CD4-positive, alpha-beta T cell (primary cell): ENCODE measurements at regions of chr9 and their contacts with region 1.

Region 1: DNA sequence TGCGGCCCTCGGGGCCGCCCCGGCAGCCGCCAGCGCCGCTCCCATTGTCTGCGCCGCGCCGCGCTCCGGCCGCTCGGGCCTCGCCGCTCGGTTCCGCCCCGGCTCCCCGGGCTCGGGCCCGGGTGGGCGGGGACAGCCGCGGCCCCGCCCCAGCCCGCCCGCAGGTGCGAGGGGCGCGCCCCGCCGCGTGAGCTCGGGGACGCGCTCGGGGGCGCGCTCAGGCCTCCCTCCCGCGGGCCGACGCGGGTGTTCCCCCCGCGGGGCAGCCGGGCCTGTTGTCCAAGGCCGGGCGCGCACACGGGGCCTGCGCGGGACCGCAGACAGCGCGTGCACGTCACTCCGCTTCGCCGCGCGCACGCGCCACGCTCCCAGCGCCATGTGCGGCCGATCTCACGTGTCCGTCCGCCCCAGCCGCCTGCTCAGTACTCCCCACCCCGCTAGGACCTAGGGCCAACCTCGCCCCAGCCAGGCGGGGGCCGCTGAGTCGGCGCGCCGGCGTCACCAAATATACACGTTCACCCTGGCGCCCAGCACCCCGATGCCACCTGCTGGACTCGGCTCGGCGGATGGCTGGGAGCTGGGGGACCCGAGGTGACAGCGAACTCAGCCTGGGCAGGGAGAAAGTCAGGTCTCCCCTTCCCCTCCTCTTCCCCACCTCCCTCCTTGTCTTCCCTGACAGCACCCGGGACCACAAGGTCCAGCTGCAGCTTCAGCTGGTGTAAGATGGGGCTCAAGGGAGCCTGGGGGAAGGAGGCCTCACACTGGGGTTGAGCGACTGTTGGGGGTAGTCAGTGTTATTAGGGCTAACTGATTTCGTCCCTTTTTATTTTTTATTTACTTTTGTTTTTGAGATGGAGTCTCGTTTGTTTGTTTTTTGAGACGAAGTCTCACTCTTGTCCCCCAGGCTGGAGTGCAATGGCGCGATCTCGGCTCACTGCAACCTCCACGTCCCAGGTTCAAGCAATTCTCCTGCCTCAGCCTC is 14.3 kb downstream of the GBGT1 start:
- DNase-seq: peak; percentile 64 to 95 (median 73)
- ATAC-seq: peak; percentile 43
- H3K4me3 ChIP-seq: peak overlapping the region; percentile 58
- H3K4me3 Mint-ChIP-seq: peak overlapping the region; percentile 88
- H3K27ac ChIP-seq: peak overlapping the region; percentile 60 to 74
- H3K27ac Mint-ChIP-seq: peak overlapping the region; percentile 87
- H3K4me1 ChIP-seq: peaks cover 43% of the 10 kb centered on the region
- H3K4me1 Mint-ChIP-seq: peaks cover 33% of the 10 kb centered on the region
- H3K27me3 ChIP-seq: no peaks in the 10 kb centered on the region
- H3K27me3 Mint-ChIP-seq: no peaks in the 10 kb centered on the region
- CTCF ChIP-seq: peak; percentile 44

Region 2: GRCh38 chr9:133023117-133023890 is 126.1 kb before region 1 on chr9:
- CTCF ChIA-PET with region 1: interaction called, 10 read pairs
- POLR2A ChIA-PET with region 1: no interaction called
- intact Hi-C with region 1: loop called in 1 of 2 experiments (anchors 2 kb)
- DNase-seq: peak in 10 of 14 experiments; percentile 12 to 59 (median 36)
- ATAC-seq: no peak
- H3K4me3 ChIP-seq: no peak overlapping the region
- H3K4me3 Mint-ChIP-seq: no peak overlapping the region
- H3K27ac ChIP-seq: no peak overlapping the region
- H3K27ac Mint-ChIP-seq: no peak overlapping the region
- H3K4me1 ChIP-seq: peaks cover 14% of the 10 kb centered on the region
- H3K4me1 Mint-ChIP-seq: peaks cover 10% of the 10 kb centered on the region
- H3K27me3 ChIP-seq: no peaks in the 10 kb centered on the region
- H3K27me3 Mint-ChIP-seq: peaks cover 5% of the 10 kb centered on the region
- CTCF ChIP-seq: no peak

Region 3: DNA sequence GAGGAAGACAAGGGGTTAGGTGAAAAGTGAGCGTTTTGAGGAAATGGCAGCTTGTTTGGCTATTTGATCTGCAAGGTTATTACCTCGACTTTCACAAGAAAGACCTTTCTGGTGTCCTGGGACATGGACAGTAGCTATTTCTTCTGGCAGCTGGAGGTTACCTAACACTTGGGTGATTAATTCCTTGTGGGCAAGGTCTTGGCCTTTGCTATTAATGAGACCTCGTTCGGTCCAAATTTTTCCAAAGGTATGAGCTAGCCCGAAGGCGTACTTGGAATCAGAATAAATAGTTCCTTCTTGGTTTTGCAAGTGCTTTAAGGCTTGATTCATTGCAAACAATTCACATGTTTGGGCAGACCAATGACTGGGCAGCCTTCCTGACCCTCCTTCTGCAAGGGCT is 113.7 kb before region 1 on chr9:
- CTCF ChIA-PET with region 1: interaction called, 7 read pairs
- POLR2A ChIA-PET with region 1: interaction called, 20 read pairs
- intact Hi-C with region 1: loop called in 1 of 2 experiments (anchors 5 kb)
- DNase-seq: no peak
- ATAC-seq: no peak
- H3K4me3 ChIP-seq: no peak overlapping the region
- H3K4me3 Mint-ChIP-seq: no peak overlapping the region
- H3K27ac ChIP-seq: no peak overlapping the region
- H3K27ac Mint-ChIP-seq: no peak overlapping the region
- H3K4me1 ChIP-seq: peaks cover 18% of the 10 kb centered on the region
- H3K4me1 Mint-ChIP-seq: peaks cover 59% of the 10 kb centered on the region
- H3K27me3 ChIP-seq: no peaks in the 10 kb centered on the region
- H3K27me3 Mint-ChIP-seq: no peaks in the 10 kb centered on the region
- CTCF ChIP-seq: no peak

Region 4: DNA sequence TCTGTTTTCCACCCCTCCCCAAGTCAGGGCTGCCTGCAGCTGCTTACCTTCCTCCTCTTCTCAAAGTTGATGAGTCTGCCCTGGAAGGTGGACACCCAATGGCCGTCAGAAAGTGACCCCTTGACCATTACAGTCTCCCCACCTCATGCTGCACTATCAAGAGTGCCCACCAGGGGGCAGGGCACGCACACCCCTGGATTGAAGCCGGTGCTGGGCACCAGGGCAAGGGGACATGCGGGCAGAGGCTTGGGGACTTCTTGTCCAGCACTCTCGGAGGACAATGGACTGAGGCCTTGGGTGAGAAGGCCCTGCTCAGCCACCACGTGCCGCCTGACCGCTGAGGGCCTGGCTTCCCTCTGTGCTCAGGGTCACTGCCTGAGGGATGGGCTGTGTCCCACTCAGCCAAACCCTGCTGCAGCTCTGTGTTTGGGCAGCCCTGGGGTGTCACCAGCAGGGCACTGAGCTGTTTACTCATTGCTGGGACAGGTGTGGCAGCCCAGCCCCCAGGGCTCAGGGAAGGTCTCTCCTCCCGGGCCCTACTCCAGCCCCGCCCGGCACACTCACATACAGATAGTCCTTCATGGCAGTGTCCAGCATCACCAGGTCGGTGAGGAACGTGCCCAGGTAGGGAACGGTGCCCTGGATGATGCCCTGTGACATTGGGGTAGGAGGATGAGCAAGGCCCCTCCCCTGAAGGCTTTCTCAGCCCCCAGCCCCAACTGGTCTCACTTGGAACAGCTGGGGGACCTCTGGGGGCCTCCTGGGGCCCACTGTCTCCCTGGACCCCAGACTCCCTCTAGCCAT is 46.0 kb before region 1 on chr9:
- CTCF ChIA-PET with region 1: interaction called, 39 read pairs
- POLR2A ChIA-PET with region 1: interaction called, 7 read pairs
- intact Hi-C with region 1: loop called (anchors 1 kb)
- DNase-seq: peak; percentile 38 to 76 (median 50)
- ATAC-seq: peak; percentile 50
- H3K4me3 ChIP-seq: no peak overlapping the region
- H3K4me3 Mint-ChIP-seq: peak overlapping the region; percentile 11
- H3K27ac ChIP-seq: peak overlapping the region in 1 of 2 donors; percentile 19
- H3K27ac Mint-ChIP-seq: peak overlapping the region; percentile 51
- H3K4me1 ChIP-seq: no peaks in the 10 kb centered on the region
- H3K4me1 Mint-ChIP-seq: no peaks in the 10 kb centered on the region
- H3K27me3 ChIP-seq: no peaks in the 10 kb centered on the region
- H3K27me3 Mint-ChIP-seq: no peaks in the 10 kb centered on the region
- CTCF ChIP-seq: peak; percentile 96

Region 5: DNA sequence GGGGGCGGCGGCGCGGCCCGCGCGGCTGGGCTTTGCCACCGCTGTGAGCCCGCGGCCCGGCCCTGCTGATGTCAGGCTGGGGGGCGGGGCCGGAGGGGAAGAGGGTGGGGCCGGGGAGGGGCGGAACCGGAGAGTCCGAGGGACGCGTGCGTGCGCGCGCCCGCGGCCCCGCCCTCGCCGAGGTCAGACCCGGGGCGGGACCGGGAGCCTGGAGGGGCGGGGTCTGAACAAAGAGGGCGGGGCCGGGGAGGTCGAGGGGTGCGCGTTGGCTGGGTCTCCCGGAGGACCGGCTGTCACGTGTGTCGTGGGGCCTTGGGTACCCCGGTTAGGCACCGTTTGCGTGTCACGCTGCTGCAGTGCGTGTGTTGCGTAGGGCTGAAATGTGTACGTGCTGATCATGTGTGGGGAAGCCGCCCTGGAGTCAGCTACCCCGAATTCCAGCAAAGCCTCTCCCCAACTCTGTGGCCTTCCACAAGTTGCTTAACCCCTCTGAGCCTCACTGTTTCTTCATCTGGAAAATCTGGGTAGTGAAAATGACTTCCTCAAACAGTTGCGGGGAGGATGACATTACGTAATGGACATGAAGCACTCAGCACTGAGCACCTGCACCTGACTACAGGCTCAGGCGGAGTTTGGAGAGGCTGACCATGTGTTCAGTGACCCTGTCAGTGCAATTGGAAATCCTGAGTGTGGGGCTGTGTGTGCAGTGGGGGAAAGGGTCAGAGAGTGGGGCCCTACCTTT is 28.0 kb before region 1 on chr9 and contains the start of gene RALGDS:
- CTCF ChIA-PET with region 1: interaction called, 41 read pairs
- POLR2A ChIA-PET with region 1: interaction called, 34 read pairs
- intact Hi-C with region 1: loop called (anchors 1 to 2 kb)
- DNase-seq: peak; percentile 83 to 97 (median 90)
- ATAC-seq: peak; percentile 75
- H3K4me3 ChIP-seq: peak within 1 kb of the TSS; percentile 56
- H3K4me3 Mint-ChIP-seq: peak within 1 kb of the TSS; percentile 85
- H3K27ac ChIP-seq: peak within 1 kb of the TSS; percentile 75 to 98
- H3K27ac Mint-ChIP-seq: peak within 1 kb of the TSS; percentile 96
- H3K4me1 ChIP-seq: peaks cover 90% of the 10 kb centered on the region
- H3K4me1 Mint-ChIP-seq: peaks cover 61% of the 10 kb centered on the region
- H3K27me3 ChIP-seq: no peaks in the 10 kb centered on the region
- H3K27me3 Mint-ChIP-seq: no peaks in the 10 kb centered on the region
- CTCF ChIP-seq: no peak
- total RNA-seq, gene RALGDS: 166 to 168 TPM

Region 6: DNA sequence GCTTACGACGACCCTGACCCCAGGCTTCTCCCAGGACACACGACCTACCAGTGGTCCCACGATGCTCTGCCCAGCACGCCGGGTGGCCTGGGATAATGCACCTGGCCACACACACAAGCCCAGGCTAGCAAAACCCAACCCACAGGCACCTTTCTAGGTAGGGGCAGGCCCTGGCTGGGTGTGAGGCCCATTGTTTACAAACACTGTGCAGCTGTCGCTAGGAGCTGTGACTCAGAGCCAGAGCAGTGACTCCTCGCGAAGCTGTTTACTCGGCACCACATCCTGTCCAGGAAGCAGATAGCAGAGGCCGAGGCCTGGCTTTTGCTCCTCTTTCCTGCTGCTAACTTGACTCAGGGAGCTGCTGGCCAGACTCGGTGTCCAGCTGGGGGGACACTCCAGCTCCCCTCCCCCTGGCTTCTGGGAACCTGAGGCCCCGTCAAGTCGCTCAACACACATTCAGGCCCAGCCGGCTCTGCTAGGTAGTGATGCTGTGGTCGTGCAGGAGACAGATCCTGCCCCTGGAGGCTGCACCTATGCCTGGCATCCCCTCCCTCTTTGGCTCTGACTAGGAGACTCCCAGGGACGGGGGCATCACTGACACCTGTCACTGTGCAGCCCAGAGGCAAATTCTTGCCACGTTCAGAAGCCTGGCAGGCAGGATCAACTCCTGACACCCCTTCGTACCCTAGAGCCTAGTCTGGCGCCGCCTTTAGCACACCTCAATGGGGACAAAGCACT is 15.6 kb before region 1 on chr9:
- CTCF ChIA-PET with region 1: interaction called, 61 read pairs
- POLR2A ChIA-PET with region 1: interaction called, 48 read pairs
- intact Hi-C with region 1: loop called in 1 of 2 experiments (anchors 1 kb)
- DNase-seq: peak; percentile 83 to 98 (median 88)
- ATAC-seq: peak; percentile 80
- H3K4me3 ChIP-seq: peak overlapping the region; percentile 20
- H3K4me3 Mint-ChIP-seq: peak overlapping the region; percentile 87
- H3K27ac ChIP-seq: peak overlapping the region; percentile 98
- H3K27ac Mint-ChIP-seq: peak overlapping the region; percentile 99
- H3K4me1 ChIP-seq: peaks cover 100% of the 10 kb centered on the region
- H3K4me1 Mint-ChIP-seq: peaks cover 70% of the 10 kb centered on the region
- H3K27me3 ChIP-seq: no peaks in the 10 kb centered on the region
- H3K27me3 Mint-ChIP-seq: no peaks in the 10 kb centered on the region
- CTCF ChIP-seq: peak; percentile 9

Region 7: GRCh38 chr9:133199648-133200321 is 50.4 kb after region 1 on chr9:
- CTCF ChIA-PET with region 1: no interaction called
- POLR2A ChIA-PET with region 1: no interaction called
- intact Hi-C with region 1: no loop called
- DNase-seq: peak in 9 of 14 experiments; percentile 31 to 66 (median 43)
- ATAC-seq: peak; percentile 96
- H3K4me3 ChIP-seq: peak overlapping the region; percentile 34
- H3K4me3 Mint-ChIP-seq: peak overlapping the region; percentile 81
- H3K27ac ChIP-seq: peak overlapping the region in 1 of 2 donors; percentile 7
- H3K27ac Mint-ChIP-seq: peak overlapping the region; percentile 58
- H3K4me1 ChIP-seq: peaks cover 2% of the 10 kb centered on the region
- H3K4me1 Mint-ChIP-seq: peaks cover 10% of the 10 kb centered on the region
- H3K27me3 ChIP-seq: peaks cover 2 to 8% of the 10 kb centered on the region in 2 experiments
- H3K27me3 Mint-ChIP-seq: peaks cover 5% of the 10 kb centered on the region
- CTCF ChIP-seq: peak; percentile 58

Region 8: GRCh38 chr9:133320421-133320881 is 171.0 kb after region 1 on chr9:
- CTCF ChIA-PET with region 1: no interaction called
- POLR2A ChIA-PET with region 1: no interaction called
- intact Hi-C with region 1: no loop called
- DNase-seq: no peak
- ATAC-seq: no peak
- H3K4me3 ChIP-seq: no peak overlapping the region
- H3K4me3 Mint-ChIP-seq: no peak overlapping the region
- H3K27ac ChIP-seq: no peak overlapping the region
- H3K27ac Mint-ChIP-seq: no peak overlapping the region
- H3K4me1 ChIP-seq: no peaks in the 10 kb centered on the region
- H3K4me1 Mint-ChIP-seq: no peaks in the 10 kb centered on the region
- H3K27me3 ChIP-seq: no peaks in the 10 kb centered on the region
- H3K27me3 Mint-ChIP-seq: no peaks in the 10 kb centered on the region
- CTCF ChIP-seq: no peak